ENCODE measurements at regions of chr6 and their contacts with region 1.

Region 1: DNA sequence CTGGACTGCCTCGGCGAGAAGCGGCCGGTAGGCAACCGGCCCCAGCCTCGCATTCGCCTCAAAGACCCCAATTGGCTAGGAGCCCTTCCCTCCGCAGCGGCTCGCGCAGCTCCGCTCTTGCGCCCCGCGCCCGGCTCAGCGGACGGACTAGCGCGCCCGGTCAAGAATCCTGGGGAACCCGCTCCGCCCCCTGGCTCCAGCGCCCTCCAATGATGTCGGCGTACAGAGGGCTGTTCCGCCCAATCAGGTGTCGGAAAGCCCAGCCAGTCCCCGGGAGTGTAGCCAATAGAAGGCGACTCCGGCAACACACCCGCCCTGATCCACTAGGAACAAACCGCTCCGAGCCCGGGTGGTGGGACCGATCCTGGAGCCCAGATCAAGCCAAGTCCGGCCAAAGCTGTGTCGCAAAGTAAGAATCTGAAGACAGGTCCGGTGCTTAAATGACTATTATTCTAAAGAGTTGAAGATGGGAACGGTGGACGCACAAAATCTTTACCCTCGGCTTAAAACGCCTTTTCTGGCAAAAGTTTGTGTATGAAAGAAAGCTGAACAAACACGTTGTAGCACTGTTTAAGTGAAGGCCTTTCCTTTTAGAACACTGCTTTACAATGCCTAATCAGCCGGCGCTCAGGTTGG is 132.2 kb downstream of the OGFRL1 start:
- DNase-seq: peak; percentile 95
- H3K4me3 ChIP-seq: peak overlapping the region; percentile 97 to 99 (median 98)
- H3K27ac ChIP-seq: peak overlapping the region; percentile 75
- H3K4me1 ChIP-seq: peaks cover 16% of the 10 kb centered on the region
- H3K27me3 ChIP-seq: no peaks in the 10 kb centered on the region
- CTCF ChIP-seq: no peak

Region 2: DNA sequence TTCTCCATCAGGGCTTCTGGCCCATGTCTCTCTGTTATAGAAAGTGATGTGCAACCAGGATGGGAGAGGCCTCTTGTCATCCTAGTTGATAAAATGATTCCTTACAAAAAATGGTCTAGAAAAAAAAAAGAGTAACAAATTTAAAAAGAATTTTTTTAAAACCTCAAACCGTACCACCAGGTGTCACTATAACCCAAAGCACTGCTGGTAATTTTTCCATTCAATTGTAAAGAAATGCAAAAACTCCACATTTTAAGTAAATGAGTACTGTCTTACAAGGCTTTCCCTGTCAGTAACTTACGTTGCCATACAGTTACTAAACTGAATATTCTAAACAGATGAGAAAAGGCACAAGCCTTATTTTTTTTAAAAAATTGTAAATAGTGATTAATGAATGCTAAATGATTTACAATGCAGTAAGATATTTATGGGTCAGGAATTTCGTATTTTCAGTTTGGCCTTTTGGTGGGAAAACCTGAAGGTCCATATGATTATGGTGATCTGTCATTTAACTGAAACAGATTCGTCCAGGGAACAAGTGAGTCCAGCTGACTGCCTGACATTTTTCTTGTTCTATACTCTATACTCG is 36.8 kb before region 1 on chr6:
- CTCF ChIA-PET with region 1: no interaction called
- dilution Hi-C with region 1: no loop called
- in situ Hi-C with region 1: no loop called
- intact Hi-C with region 1: loop called (anchors 1 kb)
- DNase-seq: no peak
- H3K4me3 ChIP-seq: no peak overlapping the region
- H3K27ac ChIP-seq: no peak overlapping the region
- H3K4me1 ChIP-seq: peaks cover 49% of the 10 kb centered on the region
- H3K27me3 ChIP-seq: no peaks in the 10 kb centered on the region
- CTCF ChIP-seq: peak; percentile 43 to 61

Region 3: GRCh38 chr6:71404145-71404966 is 16.5 kb before region 1 on chr6:
- CTCF ChIA-PET with region 1: no interaction called
- dilution Hi-C with region 1: no loop called
- in situ Hi-C with region 1: no loop called
- intact Hi-C with region 1: loop called (anchors 2 kb)
- DNase-seq: peak; percentile 88
- H3K4me3 ChIP-seq: peak overlapping the region; percentile 2 to 43 (median 29)
- H3K27ac ChIP-seq: peak overlapping the region; percentile 93
- H3K4me1 ChIP-seq: peaks cover 65% of the 10 kb centered on the region
- H3K27me3 ChIP-seq: no peaks in the 10 kb centered on the region
- CTCF ChIP-seq: no peak

Region 4: GRCh38 chr6:71468841-71469750 is 48.3 kb after region 1 on chr6:
- CTCF ChIA-PET with region 1: no interaction called
- dilution Hi-C with region 1: no loop called
- in situ Hi-C with region 1: no loop called
- intact Hi-C with region 1: loop called (anchors 2 kb)
- DNase-seq: peak; percentile 78
- H3K4me3 ChIP-seq: no peak overlapping the region
- H3K27ac ChIP-seq: peak overlapping the region; percentile 26
- H3K4me1 ChIP-seq: peaks cover 33% of the 10 kb centered on the region
- H3K27me3 ChIP-seq: no peaks in the 10 kb centered on the region
- CTCF ChIP-seq: no peak

Region 5: GRCh38 chr6:71478834-71479541 is 58.2 kb after region 1 on chr6:
- CTCF ChIA-PET with region 1: no interaction called
- dilution Hi-C with region 1: no loop called
- in situ Hi-C with region 1: no loop called
- intact Hi-C with region 1: loop called (anchors 1 kb)
- DNase-seq: peak; percentile 85
- H3K4me3 ChIP-seq: no peak overlapping the region
- H3K27ac ChIP-seq: peak overlapping the region; percentile 87
- H3K4me1 ChIP-seq: peaks cover 38% of the 10 kb centered on the region
- H3K27me3 ChIP-seq: no peaks in the 10 kb centered on the region
- CTCF ChIP-seq: no peak

Region 6: GRCh38 chr6:71510057-71510713 is 89.4 kb after region 1 on chr6:
- CTCF ChIA-PET with region 1: no interaction called
- dilution Hi-C with region 1: no loop called
- in situ Hi-C with region 1: no loop called
- intact Hi-C with region 1: loop called (anchors 1 kb)
- DNase-seq: peak; percentile 58
- H3K4me3 ChIP-seq: no peak overlapping the region
- H3K27ac ChIP-seq: no peak overlapping the region
- H3K4me1 ChIP-seq: peaks cover 2% of the 10 kb centered on the region
- H3K27me3 ChIP-seq: no peaks in the 10 kb centered on the region
- CTCF ChIP-seq: peak; percentile 61 to 72

Measured in mammary epithelial cell (primary cell).